Ascending aorta (tissue), 2 donors: ENCODE measurements at regions of chr2 and their contacts with region 1.

Region 1: DNA sequence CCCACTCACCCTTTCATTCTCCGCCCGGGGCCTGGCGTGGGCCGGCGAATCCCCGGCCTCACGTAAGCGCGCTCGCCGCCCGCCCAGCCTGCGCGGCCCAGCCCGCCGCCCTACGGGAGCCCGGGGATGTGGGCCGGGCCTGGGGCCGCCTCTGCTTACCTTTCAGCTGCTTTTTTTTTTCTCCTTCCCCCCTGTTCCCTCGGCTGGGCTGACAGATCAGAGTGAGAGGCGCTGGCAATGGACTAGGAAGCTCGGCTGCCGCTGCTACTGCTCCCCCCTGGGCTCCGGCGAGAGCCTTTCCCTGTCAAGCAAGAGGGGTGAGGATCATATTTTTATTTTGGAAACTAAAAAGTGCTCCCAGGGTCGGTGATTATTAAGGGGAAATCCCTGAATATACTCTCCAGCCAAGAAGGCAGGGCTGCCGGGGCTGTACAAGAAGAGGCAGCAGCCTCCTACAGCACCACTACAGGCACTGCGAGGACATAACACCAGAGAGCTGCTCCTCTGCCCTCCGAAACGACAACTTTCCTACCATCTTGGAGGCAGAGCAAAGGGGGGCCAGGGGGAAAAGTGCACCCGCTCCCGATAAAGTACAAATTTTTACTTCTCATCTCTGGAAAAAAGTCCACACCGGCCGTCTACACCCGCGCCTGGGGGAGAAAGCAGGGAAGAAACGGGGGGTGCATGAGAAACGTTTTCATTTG is at the start of gene INO80D:
- DNase-seq: peak; percentile 27 to 87
- H3K4me3 ChIP-seq: peak within 1 kb of the TSS; percentile 88 to 98
- H3K27ac ChIP-seq: peak within 1 kb of the TSS; percentile 98 to 99
- H3K4me1 ChIP-seq: peaks cover 0 to 17% of the 10 kb centered on the region in 2 donors
- H3K27me3 ChIP-seq: no peaks in the 10 kb centered on the region
- CTCF ChIP-seq: peak; percentile 46 to 61 (median 57)
- total RNA-seq, gene INO80D: 10.1 TPM

Region 2: GRCh38 chr2:205721057-205721449 is 364.8 kb before region 1 on chr2:
- intact Hi-C with region 1: no loop called
- DNase-seq: no peak
- H3K4me3 ChIP-seq: no peak overlapping the region
- H3K27ac ChIP-seq: no peak overlapping the region
- H3K4me1 ChIP-seq: no peaks in the 10 kb centered on the region
- H3K27me3 ChIP-seq: no peaks in the 10 kb centered on the region
- CTCF ChIP-seq: no peak

Region 3: DNA sequence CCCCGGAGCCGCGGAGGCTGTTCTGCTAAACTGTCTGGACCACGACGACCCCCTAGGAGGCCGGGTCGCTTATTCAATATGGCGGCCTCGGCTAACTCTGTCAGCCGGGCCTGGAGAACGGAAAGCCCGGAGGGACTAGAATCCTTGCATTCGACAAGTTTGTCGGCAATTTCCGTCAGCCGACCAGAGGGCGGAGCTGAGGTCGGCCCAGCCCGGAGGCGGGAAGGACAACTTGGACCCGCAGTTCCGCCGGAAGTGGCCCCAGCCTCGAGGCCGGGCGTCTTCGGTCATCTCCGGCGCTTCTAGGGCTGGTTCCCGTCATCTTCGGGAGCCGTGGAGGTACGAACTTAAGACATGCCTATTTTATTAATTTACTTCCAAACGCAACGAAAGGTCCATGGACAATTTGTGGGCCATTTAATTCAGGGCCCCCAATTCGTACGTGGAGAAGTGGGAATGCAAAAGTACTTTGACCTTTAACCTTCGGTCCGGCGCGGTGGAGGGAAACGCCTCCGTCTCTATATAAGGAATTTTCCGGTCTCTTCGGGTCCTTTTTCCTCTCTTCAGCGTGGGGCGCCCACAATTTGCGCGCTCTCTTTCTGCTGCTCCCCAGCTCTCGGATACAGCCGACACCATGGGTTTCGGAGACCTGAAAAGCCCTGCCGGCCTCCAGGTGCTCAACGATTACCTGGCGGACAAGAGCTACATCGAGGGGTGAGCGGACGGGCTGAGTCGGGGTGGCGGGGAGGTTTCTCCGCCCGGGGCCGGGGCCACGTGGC is 73.6 kb after region 1 on chr2 and contains the starts of genes EEF1B2 and NDUFS1:
- intact Hi-C with region 1: loop called (anchors 1 kb)
- DNase-seq: peak; percentile 86 to 98
- H3K4me3 ChIP-seq: peak within 1 kb of the TSS; percentile 77 to 89
- H3K27ac ChIP-seq: peak within 1 kb of the TSS; percentile 92 to 93
- H3K4me1 ChIP-seq: peaks cover 0 to 21% of the 10 kb centered on the region in 2 donors
- H3K27me3 ChIP-seq: no peaks in the 10 kb centered on the region
- CTCF ChIP-seq: no peak
- total RNA-seq, gene EEF1B2: 229 TPM
- total RNA-seq, gene NDUFS1: 16.4 TPM

Region 4: DNA sequence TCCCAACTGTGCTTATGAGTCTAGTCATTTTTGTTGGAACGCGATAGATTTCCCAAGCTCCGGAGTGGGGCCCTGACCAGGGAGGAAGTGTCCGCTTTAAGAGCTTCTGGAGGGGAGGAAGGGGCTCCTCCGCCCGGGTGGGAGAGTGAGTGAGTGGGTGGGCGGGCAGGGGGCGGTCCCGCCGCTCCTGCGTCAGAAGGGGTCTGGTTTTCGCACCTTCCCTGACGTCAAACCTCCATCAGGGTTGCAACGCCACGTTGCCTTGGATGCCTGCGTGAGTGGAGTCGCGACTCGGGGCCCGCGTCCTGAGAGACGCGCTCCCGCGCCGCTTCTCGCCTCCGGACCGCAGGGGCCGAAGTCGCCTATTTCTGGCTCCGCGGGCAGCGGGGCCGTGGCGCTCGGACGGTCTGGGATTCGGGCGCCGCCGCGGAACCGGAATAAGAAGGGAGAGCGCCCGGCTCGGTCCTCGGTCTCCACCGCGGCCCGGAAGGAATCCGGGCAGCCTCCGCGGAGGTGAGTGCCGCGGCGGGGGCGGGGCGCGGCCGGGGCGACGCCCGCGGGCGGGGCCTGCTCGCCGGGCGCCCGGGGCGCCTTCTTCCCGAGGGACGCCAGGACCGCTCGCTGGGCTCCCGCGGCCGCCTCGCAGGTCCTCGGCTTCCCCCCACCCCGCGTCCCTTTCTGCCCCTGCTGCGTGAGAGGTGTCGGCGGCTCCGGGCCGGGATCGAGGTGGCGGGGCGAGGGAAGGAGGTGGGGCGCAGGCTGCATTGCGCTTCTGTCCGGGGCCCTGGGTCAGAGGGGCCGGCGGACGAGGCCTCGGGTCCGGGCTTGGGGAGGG is 188.8 kb after region 1 on chr2 and contains the start of gene ZDBF2:
- intact Hi-C with region 1: loop called (anchors 10 kb)
- DNase-seq: peak in 1 of 2 donors; percentile 66
- H3K4me3 ChIP-seq: peak within 1 kb of the TSS; percentile 58 to 82
- H3K27ac ChIP-seq: peak within 1 kb of the TSS; percentile 69 to 79
- H3K4me1 ChIP-seq: peaks cover 0 to 5% of the 10 kb centered on the region in 2 donors
- H3K27me3 ChIP-seq: peaks cover 6% of the 10 kb centered on the region
- CTCF ChIP-seq: no peak
- total RNA-seq, gene ZDBF2: 5.0 TPM